ENCODE measurements at regions of chr11 and their contacts with region 1.

Region 1: DNA sequence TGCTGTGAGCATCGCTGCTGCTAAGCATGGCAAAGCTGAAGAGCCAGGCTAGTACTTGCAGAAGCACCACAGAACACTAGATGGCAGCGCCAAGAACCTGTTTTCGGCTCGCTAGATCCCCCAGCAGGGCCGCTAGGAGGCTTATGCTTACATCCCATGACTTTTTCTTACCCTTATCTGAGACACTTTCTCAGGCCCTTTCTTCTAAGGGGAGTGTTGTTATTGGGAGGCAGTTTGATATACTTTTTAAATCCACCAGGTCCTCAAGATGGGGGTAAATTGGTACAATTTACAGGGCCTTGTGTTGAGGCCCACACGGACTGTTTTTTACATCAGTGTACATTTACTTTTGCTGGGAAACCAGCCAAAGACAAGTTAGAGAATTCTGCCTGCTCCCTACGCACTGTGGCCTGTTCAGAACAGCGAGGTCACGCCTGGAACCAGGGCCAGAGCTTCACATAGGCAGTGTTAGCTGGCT is 4.0 kb downstream of the TRIM6 start:
- DNase-seq: peak; percentile 59 to 66
- H3K4me3 ChIP-seq: no peak overlapping the region
- H3K27ac ChIP-seq: no peak overlapping the region
- H3K4me1 ChIP-seq: peaks cover 0 to 15% (median 8%) of the 10 kb centered on the region in 4 experiments
- H3K27me3 ChIP-seq: no peaks in the 10 kb centered on the region; a peak in 1 of 7 replicates
- CTCF ChIP-seq: peak; percentile 75 to 99 (median 95)
- EP300 ChIP-seq: no peak
- POLR2A ChIP-seq: no peak
- RAD21 ChIP-seq: peak; percentile 67 to 77

Region 2: DNA sequence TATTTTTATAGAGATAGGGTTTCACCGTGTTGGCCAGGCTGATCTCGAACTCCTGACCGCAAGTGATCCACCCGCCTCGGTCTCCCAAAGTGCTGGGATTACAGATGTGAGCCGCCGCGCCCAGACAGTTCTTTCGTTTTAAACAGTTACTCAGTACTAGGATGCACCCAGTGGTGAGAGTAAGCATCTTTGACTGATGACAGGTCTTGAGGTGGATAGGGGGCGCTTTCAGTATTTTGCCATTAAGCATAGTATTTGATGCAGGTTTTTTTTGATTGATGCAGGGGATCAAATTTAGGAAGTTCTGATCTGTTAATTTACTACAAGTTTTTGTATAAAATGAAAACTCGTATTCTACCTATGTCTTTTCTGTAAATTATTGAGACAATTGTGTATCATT is 11.2 kb after region 1 on chr11:
- CTCF ChIA-PET with region 1: interaction called, 71 read pairs
- POLR2A ChIA-PET with region 1: interaction called, 4 read pairs
- DNase-seq: no peak
- H3K4me3 ChIP-seq: no peak overlapping the region
- H3K27ac ChIP-seq: no peak overlapping the region
- H3K4me1 ChIP-seq: no peaks in the 10 kb centered on the region
- H3K27me3 ChIP-seq: no peaks in the 10 kb centered on the region
- CTCF ChIP-seq: peak in 2 of 3 experiments; percentile 45 to 91; a peak in 3 of 4 replicates
- EP300 ChIP-seq: no peak
- POLR2A ChIP-seq: no peak
- RAD21 ChIP-seq: peak; percentile 46 to 49

Region 3: GRCh38 chr11:5620646-5621521 is 20.5 kb after region 1 on chr11:
- CTCF ChIA-PET with region 1: interaction called, 15 read pairs
- POLR2A ChIA-PET with region 1: interaction called, 3 read pairs
- DNase-seq: no peak
- H3K4me3 ChIP-seq: no peak overlapping the region
- H3K27ac ChIP-seq: no peak overlapping the region
- H3K4me1 ChIP-seq: peaks cover 0 to 17% (median 6%) of the 10 kb centered on the region in 4 experiments; a peak in 4 of 7 replicates
- H3K27me3 ChIP-seq: no peaks in the 10 kb centered on the region
- CTCF ChIP-seq: no peak
- EP300 ChIP-seq: no peak
- POLR2A ChIP-seq: no peak
- RAD21 ChIP-seq: no peak

Region 4: GRCh38 chr11:5767056-5767455 is 166.6 kb after region 1 on chr11:
- CTCF ChIA-PET with region 1: no interaction called
- POLR2A ChIA-PET with region 1: no interaction called
- DNase-seq: no peak
- H3K4me3 ChIP-seq: no peak overlapping the region
- H3K27ac ChIP-seq: no peak overlapping the region
- H3K4me1 ChIP-seq: no peaks in the 10 kb centered on the region
- H3K27me3 ChIP-seq: no peaks in the 10 kb centered on the region
- CTCF ChIP-seq: no peak
- EP300 ChIP-seq: no peak
- POLR2A ChIP-seq: no peak
- RAD21 ChIP-seq: no peak

Measured in H1 (cell line).